ENCODE measurements at regions of chr11 and their contacts with region 1.

Region 1: GRCh38 chr11:111299101-111300026 is 1.0 kb downstream of the POU2AF3 start:
- DNase-seq: peak; percentile 25 to 73 (median 61)
- ATAC-seq: peak in 3 of 4 donors; percentile 81 to 91 (median 89)
- H3K4me3 ChIP-seq: peak overlapping the region; percentile 42 to 71 (median 61)
- H3K27ac ChIP-seq: peak overlapping the region in 10 of 12 donors; percentile 13 to 90 (median 59)
- H3K4me1 ChIP-seq: peaks cover 0 to 17% (median 6%) of the 10 kb centered on the region in 12 donors
- H3K27me3 ChIP-seq: peaks cover 0 to 36% (median 7%) of the 10 kb centered on the region in 9 donors
- CTCF ChIP-seq: peak; percentile 22 to 60 (median 48)
- POLR2A ChIP-seq: no peak

Region 2: DNA sequence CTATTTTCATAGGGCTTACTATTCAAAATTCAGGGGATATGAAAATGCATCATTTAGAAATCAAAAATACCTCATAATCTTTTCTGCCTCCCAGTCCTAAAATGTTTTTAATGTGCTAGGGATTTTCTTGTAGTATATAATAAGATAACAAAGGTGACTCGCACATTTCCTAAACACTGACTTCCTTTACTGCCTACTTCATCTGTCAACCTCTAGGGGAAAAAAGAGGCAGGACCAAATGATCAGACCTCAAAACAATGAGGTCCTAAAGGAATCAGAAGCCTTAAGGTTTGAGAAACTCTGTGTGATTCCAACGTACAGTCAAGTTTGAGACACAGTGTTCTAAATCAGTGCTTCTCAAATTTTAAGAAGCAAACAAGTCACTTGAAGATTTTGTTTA is 109.9 kb before region 1 on chr11:
- intact Hi-C with region 1: no loop called
- DNase-seq: no peak
- ATAC-seq: no peak
- H3K4me3 ChIP-seq: no peak overlapping the region
- H3K27ac ChIP-seq: no peak overlapping the region
- H3K4me1 ChIP-seq: peaks cover 0 to 6% (median 0%) of the 10 kb centered on the region in 12 donors
- H3K27me3 ChIP-seq: peaks cover 0 to 8% (median 0%) of the 10 kb centered on the region in 9 donors
- CTCF ChIP-seq: no peak
- POLR2A ChIP-seq: no peak

Region 3: GRCh38 chr11:111422494-111423249 is 123.3 kb after region 1 on chr11:
- intact Hi-C with region 1: loop called in 3 of 10 experiments (anchors 5 kb)
- DNase-seq: peak in 2 of 5 donors; percentile 32 to 47
- ATAC-seq: peak in 3 of 4 donors; percentile 68 to 78 (median 78)
- H3K4me3 ChIP-seq: no peak overlapping the region
- H3K27ac ChIP-seq: no peak overlapping the region
- H3K4me1 ChIP-seq: peaks cover 0 to 20% (median 5%) of the 10 kb centered on the region in 12 donors
- H3K27me3 ChIP-seq: peaks cover 0 to 6% (median 0%) of the 10 kb centered on the region in 9 donors
- CTCF ChIP-seq: peak; percentile 44 to 73 (median 66)
- POLR2A ChIP-seq: no peak

Region 4: DNA sequence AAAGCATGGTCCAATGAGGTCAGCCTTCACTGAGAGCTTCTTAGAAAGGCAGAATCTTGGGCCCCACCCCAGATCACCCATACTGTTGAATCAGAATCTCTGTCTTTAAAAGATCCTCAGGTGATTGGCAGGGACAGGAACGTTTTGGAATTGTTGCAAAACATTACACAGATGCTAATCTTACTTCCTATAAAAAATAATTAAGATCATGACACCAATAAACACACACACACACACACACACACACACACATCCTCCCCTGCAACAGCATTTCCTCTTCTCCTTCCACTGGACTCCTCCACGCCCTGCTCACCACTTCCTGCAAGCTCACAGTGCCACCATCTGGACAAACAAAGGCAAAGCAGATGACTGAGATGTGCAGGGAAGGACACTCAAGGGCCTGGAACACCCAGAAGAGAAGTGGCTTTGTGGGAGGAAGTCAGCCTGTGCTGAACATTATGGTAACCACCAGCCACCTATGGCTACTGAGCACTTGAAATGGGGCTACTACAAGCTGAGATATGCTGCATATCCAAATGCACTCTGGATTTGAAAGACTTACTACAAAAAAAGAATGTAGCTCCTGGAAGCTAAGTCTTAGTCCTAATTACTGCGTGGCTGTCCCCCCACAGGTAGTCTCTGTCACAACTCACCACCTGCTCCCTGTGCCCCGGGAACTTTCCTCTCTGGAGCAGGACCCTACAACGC is 147.2 kb after region 1 on chr11:
- intact Hi-C with region 1: loop called in 1 of 10 experiments (anchors 5 kb)
- DNase-seq: peak in 4 of 5 donors; percentile 80 to 86 (median 84)
- ATAC-seq: peak; percentile 94 to 97 (median 95)
- H3K4me3 ChIP-seq: no peak overlapping the region
- H3K27ac ChIP-seq: peak overlapping the region in 2 of 12 donors; percentile 32 to 50
- H3K4me1 ChIP-seq: peaks cover 0 to 20% (median 8%) of the 10 kb centered on the region in 12 donors
- H3K27me3 ChIP-seq: peaks cover 0 to 8% (median 0%) of the 10 kb centered on the region in 9 donors
- CTCF ChIP-seq: peak; percentile 64 to 82 (median 74)
- POLR2A ChIP-seq: no peak